ENCODE measurements at regions of chr16 and their contacts with region 1.

Region 1: DNA sequence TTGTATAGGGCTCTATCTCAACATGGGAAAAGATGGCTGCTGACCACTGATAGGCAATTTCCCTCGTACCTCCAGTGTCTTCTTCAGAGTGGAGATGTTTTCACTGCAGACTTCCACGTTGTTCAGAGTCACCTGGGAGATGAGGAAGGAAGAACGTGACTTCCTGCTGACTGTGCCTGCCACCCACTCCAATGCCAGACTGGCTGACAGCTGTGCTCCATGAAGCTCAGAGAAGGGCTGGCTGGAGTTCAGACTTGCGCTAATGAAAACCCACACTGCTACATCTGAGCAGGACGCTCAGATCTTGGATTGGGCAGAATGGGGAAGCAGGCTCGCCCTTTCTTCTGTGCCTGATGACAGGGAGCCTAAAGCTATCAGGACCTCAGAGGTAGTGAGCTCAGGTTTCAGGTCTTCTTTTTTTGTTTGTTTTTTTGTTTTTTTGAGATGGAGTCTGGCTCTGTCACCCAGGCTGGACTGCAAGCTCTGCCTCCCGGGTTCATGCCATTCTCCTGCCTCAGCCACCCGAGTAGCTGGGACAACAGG is 33.0 kb downstream of the COG4 start:
- DNase-seq: no peak
- H3K4me3 Mint-ChIP-seq: no peak overlapping the region
- H3K27ac Mint-ChIP-seq: no peak overlapping the region
- H3K4me1 Mint-ChIP-seq: peaks cover 18% of the 10 kb centered on the region
- H3K27me3 Mint-ChIP-seq: no peaks in the 10 kb centered on the region

Region 2: GRCh38 chr16:70444249-70445063 is 45.9 kb before region 1 on chr16:
- CTCF ChIA-PET with region 1: no interaction called
- POLR2A ChIA-PET with region 1: no interaction called
- DNase-seq: no peak
- H3K4me3 Mint-ChIP-seq: no peak overlapping the region
- H3K27ac Mint-ChIP-seq: no peak overlapping the region
- H3K4me1 Mint-ChIP-seq: peaks cover 8% of the 10 kb centered on the region
- H3K27me3 Mint-ChIP-seq: peaks cover 3% of the 10 kb centered on the region

Region 3: DNA sequence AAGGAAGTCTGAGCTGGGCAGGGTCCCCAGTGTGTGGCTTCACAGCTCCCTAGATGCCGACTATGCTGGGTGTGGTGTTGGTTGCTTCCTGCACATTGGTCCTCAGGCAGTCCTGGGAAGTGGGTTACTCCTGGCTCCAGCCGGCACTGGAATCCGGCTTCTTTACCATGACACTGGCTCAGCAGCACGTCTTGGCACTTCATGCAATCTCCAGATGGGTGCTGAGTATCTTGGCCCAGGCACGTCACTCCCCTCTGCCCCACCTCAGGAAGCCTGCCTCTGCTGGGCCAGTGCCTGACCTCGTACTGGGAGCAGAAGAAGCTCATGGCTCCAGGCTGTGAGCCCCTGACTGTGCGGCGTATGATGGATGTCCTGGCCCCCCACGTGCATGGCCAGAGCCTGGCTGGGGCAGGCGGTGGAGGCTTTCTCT is 11.4 kb before region 1 on chr16:
- CTCF ChIA-PET with region 1: interaction called, 14 read pairs
- POLR2A ChIA-PET with region 1: no interaction called
- DNase-seq: no peak
- H3K4me3 Mint-ChIP-seq: no peak overlapping the region
- H3K27ac Mint-ChIP-seq: no peak overlapping the region
- H3K4me1 Mint-ChIP-seq: peaks cover 21% of the 10 kb centered on the region
- H3K27me3 Mint-ChIP-seq: no peaks in the 10 kb centered on the region

Region 4: DNA sequence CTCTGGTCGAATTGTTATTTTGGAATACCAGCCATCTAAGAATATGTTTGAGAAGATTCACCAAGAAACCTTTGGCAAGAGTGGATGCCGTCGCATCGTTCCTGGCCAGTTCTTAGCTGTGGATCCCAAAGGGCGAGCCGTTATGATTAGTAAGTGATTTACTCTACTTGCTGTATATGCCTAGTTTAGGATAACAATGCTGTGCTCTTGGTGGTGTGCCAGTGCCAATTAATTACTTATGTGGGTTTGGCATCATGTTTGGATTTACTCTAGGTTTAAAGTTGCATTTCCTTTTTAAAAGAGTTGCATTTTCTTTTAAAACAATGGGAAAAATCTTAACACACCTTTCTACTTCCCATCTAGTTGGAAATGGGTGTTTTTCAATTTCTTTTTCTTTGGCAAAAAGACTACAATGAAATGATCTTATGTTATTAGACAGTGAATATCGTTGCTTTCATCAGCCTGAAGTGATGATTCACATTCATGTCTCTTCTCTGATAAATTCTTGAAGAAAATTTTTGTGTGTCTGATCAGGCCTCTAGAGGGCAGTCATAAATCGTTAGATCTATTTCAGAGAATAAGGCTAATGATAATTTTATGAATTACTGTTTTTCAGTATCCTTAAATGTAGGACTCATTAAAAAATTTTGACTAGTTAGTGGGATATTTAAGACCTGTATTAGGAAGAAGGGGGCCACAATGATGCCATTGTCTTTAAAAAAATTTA is 38.9 kb after region 1 on chr16:
- CTCF ChIA-PET with region 1: no interaction called
- POLR2A ChIA-PET with region 1: no interaction called
- DNase-seq: peak; percentile 32
- H3K4me3 Mint-ChIP-seq: no peak overlapping the region
- H3K27ac Mint-ChIP-seq: peak overlapping the region; percentile 68
- H3K4me1 Mint-ChIP-seq: peaks cover 48% of the 10 kb centered on the region
- H3K27me3 Mint-ChIP-seq: no peaks in the 10 kb centered on the region

Measured in activated CD4-positive, alpha-beta T cell treated with anti-CD3 and anti-CD28 coated beads, Interleukin-2, amount 10 ng/mL, durations not matched to agents 7 days and 5 days (primary cell).